Dorsolateral prefrontal cortex (tissue), 120 donors: ENCODE measurements at regions of chr7 and their contacts with region 1.

Region 1: GRCh38 chr7:48887500-48887899 is 36.8 kb upstream of the CDC14C start:
- DNase-seq: peak in 3 of 10 donors; percentile 15 to 49 (median 15)
- H3K4me3 ChIP-seq: no peak overlapping the region
- H3K27ac ChIP-seq: no peak overlapping the region
- H3K27me3 ChIP-seq: peaks cover 0 to 3% (median 0%) of the 10 kb centered on the region in 45 donors
- CTCF ChIP-seq: no peak

Region 2: GRCh38 chr7:48176356-48176893 is 711.1 kb before region 1 on chr7:
- intact Hi-C with region 1: loop called in 1 of 2 experiments (anchors 5 kb)
- DNase-seq: no peak
- H3K4me3 ChIP-seq: no peak overlapping the region
- H3K27ac ChIP-seq: no peak overlapping the region
- H3K27me3 ChIP-seq: no peaks in the 10 kb centered on the region
- CTCF ChIP-seq: no peak

Region 3: DNA sequence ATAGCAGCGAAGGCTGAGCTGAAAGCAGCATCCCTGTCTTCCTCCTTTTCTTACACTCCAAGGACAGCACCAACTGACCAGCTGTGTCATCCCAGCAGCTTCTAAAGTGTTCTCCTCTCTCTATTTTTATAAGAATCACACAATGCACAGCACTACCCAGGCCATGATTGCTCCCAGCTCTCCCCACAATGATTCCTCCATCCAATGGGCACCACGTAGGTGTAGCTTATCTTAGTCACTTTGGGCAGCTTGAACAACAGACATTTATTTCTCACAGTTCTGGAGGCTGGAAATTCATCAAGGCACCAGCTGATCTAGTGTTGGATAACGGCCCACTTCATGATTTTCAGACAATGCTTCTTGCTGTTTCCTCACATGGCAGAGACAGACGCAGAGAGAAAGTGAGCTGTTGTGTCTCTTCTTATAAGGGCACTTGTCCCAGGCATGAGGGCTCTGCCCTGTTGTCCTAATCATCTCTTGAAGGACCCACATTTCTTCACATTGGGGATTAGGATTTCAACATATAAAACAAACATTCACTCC is 55.1 kb before region 1 on chr7:
- intact Hi-C with region 1: no loop called
- DNase-seq: peak in 6 of 10 donors; percentile 6 to 67 (median 44)
- H3K4me3 ChIP-seq: peak overlapping the region in 1 of 59 donors; percentile 7
- H3K27ac ChIP-seq: peak overlapping the region in 38 of 59 donors; percentile 13 to 77 (median 54)
- H3K27me3 ChIP-seq: peaks cover 0 to 4% (median 0%) of the 10 kb centered on the region in 45 donors
- CTCF ChIP-seq: no peak

Region 4: GRCh38 chr7:49037348-49038210 is 150.1 kb after region 1 on chr7:
- intact Hi-C with region 1: no loop called
- DNase-seq: no peak
- H3K4me3 ChIP-seq: no peak overlapping the region
- H3K27ac ChIP-seq: no peak overlapping the region
- H3K27me3 ChIP-seq: no peaks in the 10 kb centered on the region
- CTCF ChIP-seq: no peak